ENCODE measurements at regions of chr2 and their contacts with region 1.

Region 1: GRCh38 chr2:230798769-230799399 is 65.9 kb upstream of the ITM2C start:
- DNase-seq: no peak
- ATAC-seq: no peak; the same call in 1 of the 2 replicates
- H3K4me3 ChIP-seq: no peak overlapping the region
- H3K27ac ChIP-seq: no peak overlapping the region
- H3K4me1 ChIP-seq: peaks cover 11% of the 10 kb centered on the region
- H3K27me3 ChIP-seq: no peaks in the 10 kb centered on the region
- CTCF ChIP-seq: peak; percentile 66; the same call in 1 of the 2 replicates

Region 2: GRCh38 chr2:230602562-230603230 is 196.2 kb before region 1 on chr2:
- CTCF ChIA-PET with region 1: no interaction called
- POLR2A ChIA-PET with region 1: no interaction called
- in situ Hi-C with region 1: no loop called
- intact Hi-C with region 1: no loop called
- DNase-seq: no peak
- ATAC-seq: no peak
- H3K4me3 ChIP-seq: no peak overlapping the region
- H3K27ac ChIP-seq: no peak overlapping the region
- H3K4me1 ChIP-seq: no peaks in the 10 kb centered on the region
- H3K27me3 ChIP-seq: no peaks in the 10 kb centered on the region
- CTCF ChIP-seq: no peak

Region 3: GRCh38 chr2:230774348-230774951 is 24.4 kb before region 1 on chr2:
- CTCF ChIA-PET with region 1: no interaction called
- POLR2A ChIA-PET with region 1: interaction called, 13 read pairs
- in situ Hi-C with region 1: no loop called
- intact Hi-C with region 1: no loop called
- DNase-seq: no peak
- ATAC-seq: peak; percentile 84
- H3K4me3 ChIP-seq: no peak overlapping the region
- H3K27ac ChIP-seq: no peak overlapping the region
- H3K4me1 ChIP-seq: peaks cover 29% of the 10 kb centered on the region
- H3K27me3 ChIP-seq: no peaks in the 10 kb centered on the region
- CTCF ChIP-seq: no peak

Region 4: GRCh38 chr2:231117922-231118613 is 319.2 kb after region 1 on chr2:
- CTCF ChIA-PET with region 1: no interaction called
- POLR2A ChIA-PET with region 1: no interaction called
- in situ Hi-C with region 1: no loop called
- intact Hi-C with region 1: no loop called
- DNase-seq: no peak
- ATAC-seq: peak; percentile 42; the same call in 1 of the 2 replicates
- H3K4me3 ChIP-seq: no peak overlapping the region
- H3K27ac ChIP-seq: no peak overlapping the region; the same call in 1 of the 2 replicates
- H3K4me1 ChIP-seq: peaks cover 6% of the 10 kb centered on the region
- H3K27me3 ChIP-seq: no peaks in the 10 kb centered on the region
- CTCF ChIP-seq: no peak